ENCODE measurements at regions of chr12 and their contacts with region 1.

Region 1: DNA sequence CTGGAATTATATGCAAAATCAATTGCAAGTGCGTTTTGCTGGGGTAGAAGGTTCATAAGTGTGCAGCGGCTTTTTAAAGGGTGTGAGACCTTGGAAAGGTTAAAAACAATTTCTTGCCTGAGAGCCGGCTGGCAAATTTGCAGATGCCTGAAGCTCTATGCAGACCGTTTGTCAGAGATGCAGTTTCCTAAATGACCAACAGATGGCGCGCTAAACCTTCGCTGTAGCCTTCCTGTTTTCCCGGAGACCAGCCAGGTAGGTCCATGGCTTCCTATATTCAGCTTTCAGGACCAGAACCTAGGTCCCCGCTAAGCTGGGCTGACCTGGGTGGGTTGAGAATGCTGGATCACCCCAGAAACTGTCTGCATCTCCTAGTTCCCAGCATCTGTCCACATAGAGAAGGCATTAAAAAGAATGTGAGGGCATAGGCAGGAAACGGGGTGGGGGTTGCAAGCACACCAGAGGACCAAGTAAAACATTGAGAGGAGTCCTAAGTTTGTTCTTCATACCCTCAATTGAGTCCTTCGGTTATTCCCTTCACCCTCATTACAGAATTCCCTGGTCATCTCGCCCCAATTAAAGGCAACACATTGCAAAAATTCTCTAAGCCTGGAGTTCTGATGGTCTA is 5.7 kb upstream of the NOS1 start:
- DNase-seq: peak; percentile 76
- H3K4me3 ChIP-seq: peak overlapping the region in 1 of 2 experiments; percentile 7; a peak in 1 of 4 replicates
- H3K27ac ChIP-seq: peak overlapping the region in 1 of 2 experiments; percentile 65; a peak in 2 of 4 replicates
- H3K4me1 ChIP-seq: peaks cover 0 to 53% of the 10 kb centered on the region in 2 experiments; a peak in 2 of 4 replicates
- H3K27me3 ChIP-seq: peaks cover 10% of the 10 kb centered on the region; the same call in 1 of the 2 replicates
- CTCF ChIP-seq: peak; percentile 92
- EP300 ChIP-seq: no peak
- RAD21 ChIP-seq: peak; percentile 96

Region 2: DNA sequence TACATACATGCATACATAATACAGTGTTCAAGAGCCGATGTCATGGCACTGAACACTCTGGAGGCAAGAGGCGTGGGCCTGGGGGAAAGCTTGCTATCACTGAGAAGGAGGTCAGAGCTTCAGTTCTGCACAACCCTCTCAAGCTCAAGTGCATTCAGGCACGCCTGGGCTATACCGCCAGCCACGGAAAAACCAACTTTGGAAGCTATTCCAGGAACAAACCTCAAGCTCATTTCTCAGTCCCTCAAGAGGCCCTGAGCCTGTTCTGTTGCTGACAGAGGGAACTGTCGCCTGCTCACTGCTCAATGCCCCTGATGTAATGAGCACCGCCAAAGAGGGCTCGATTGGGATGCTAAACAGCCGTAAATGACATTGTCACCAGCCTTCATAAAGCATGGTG is 14.9 kb before region 1 on chr12:
- CTCF ChIA-PET with region 1: interaction called, 11 read pairs
- POLR2A ChIA-PET with region 1: no interaction called
- DNase-seq: no peak
- H3K4me3 ChIP-seq: no peak overlapping the region
- H3K27ac ChIP-seq: no peak overlapping the region
- H3K4me1 ChIP-seq: peaks cover 0 to 4% of the 10 kb centered on the region in 2 experiments; a peak in 1 of 4 replicates
- H3K27me3 ChIP-seq: no peaks in the 10 kb centered on the region; the same call in 1 of the 2 replicates
- CTCF ChIP-seq: no peak
- EP300 ChIP-seq: no peak
- RAD21 ChIP-seq: no peak

Region 3: DNA sequence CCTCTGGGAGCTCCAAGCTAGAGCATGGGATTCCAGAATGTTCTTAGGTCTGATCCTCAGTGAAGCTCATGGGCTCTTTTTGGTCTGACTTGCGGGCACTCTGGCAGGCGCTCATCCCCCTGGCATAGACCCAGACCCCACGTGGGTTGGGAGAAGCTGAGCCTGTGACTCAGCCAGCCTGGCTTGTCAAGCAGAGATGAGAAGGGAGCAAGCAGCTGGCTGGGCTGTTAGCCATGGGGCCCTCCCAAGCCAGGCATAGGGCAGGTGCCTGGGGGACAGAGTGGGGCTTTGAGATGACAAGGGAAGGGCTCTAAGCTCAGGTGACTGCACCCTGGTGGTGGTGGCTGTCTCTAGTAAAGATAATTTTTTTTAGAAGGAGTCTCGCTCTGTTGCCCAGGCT is 74.6 kb after region 1 on chr12:
- CTCF ChIA-PET with region 1: interaction called, 53 read pairs
- POLR2A ChIA-PET with region 1: no interaction called
- DNase-seq: no peak
- H3K4me3 ChIP-seq: no peak overlapping the region
- H3K27ac ChIP-seq: no peak overlapping the region; a peak in 1 of 4 replicates
- H3K4me1 ChIP-seq: peaks cover 0 to 40% of the 10 kb centered on the region in 2 experiments; a peak in 1 of 4 replicates
- H3K27me3 ChIP-seq: no peaks in the 10 kb centered on the region
- CTCF ChIP-seq: no peak
- EP300 ChIP-seq: no peak
- RAD21 ChIP-seq: no peak

Region 4: GRCh38 chr12:117580718-117581062 is 213.6 kb after region 1 on chr12:
- CTCF ChIA-PET with region 1: interaction called, 90 read pairs
- POLR2A ChIA-PET with region 1: no interaction called
- DNase-seq: peak; percentile 70
- H3K4me3 ChIP-seq: no peak overlapping the region
- H3K27ac ChIP-seq: peak overlapping the region in 1 of 2 experiments; percentile 67; a peak in 1 of 4 replicates
- H3K4me1 ChIP-seq: peaks cover 0 to 33% of the 10 kb centered on the region in 2 experiments; a peak in 1 of 4 replicates
- H3K27me3 ChIP-seq: no peaks in the 10 kb centered on the region
- CTCF ChIP-seq: no peak
- EP300 ChIP-seq: no peak
- RAD21 ChIP-seq: no peak

Region 5: GRCh38 chr12:117685110-117685926 is 318.2 kb after region 1 on chr12:
- CTCF ChIA-PET with region 1: interaction called, 12 read pairs
- POLR2A ChIA-PET with region 1: interaction called, 4 read pairs
- DNase-seq: peak; percentile 84
- H3K4me3 ChIP-seq: peak overlapping the region; percentile 6 to 54; a peak in 2 of 4 replicates
- H3K27ac ChIP-seq: peak overlapping the region; percentile 94 to 97
- H3K4me1 ChIP-seq: peaks cover 32 to 44% of the 10 kb centered on the region in 2 experiments
- H3K27me3 ChIP-seq: no peaks in the 10 kb centered on the region
- CTCF ChIP-seq: no peak
- EP300 ChIP-seq: peak; percentile 86 to 96
- RAD21 ChIP-seq: peak; percentile 40

Measured in SK-N-SH (cell line).